Activated B cell treated with CpG ODN at 0.5 μM for 24 hours (primary cell): ENCODE measurements at regions of chr5 and their contacts with region 1.

Region 1: DNA sequence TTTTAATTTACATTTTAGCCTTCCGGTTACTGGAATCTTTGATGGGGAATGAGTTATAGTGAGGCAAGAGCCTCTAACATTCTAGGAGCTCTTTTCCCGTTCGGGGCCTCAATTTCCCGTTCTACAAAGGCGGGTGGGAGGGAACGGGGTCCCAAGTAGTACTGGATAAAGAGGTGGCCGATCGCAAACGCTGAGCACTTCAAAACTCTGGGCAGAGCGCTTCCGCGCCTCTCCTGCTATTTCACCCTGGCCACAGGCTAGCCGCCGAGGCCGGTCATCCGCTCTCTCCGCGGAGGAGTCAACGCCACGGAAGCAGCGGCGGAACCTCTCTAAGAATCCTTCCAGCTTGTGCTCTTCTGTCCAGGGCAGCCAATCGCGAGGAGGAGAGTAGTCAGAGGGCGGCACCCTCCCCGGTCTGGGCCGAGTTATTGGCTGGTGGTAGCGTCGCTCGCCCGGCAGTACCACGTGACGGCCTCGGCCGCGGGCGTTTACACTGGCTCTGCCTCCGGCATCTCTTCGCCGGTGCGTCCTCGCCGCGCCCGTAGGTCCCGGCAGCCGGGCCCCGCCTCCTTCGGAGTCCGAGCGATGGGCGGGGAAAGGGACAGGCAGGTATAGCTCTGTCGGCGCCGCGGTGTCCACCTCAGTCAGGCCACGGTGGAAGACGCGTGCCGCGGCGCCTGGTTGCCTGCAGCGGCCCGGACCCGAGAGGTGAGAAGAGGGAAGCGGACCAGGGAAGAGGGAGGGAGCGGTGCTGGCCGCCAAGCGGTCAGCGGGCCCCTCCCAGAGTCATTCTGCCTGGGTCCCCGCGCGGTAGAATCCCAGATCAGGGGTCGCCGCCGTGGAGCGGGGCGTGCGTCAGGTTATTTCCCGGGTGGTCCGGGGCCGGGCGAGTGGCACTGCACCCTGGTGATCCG is at the start of gene SLC26A2:
- DNase-seq: peak; percentile 88
- ATAC-seq: peak; percentile 97
- H3K4me3 Mint-ChIP-seq: peak within 1 kb of the TSS; percentile 98
- H3K27ac Mint-ChIP-seq: peak within 1 kb of the TSS; percentile 98
- H3K4me1 Mint-ChIP-seq: peaks cover 20% of the 10 kb centered on the region
- H3K27me3 Mint-ChIP-seq: no peaks in the 10 kb centered on the region
- CTCF ChIP-seq: no peak
- total RNA-seq, gene SLC26A2: 8.9 and 11.0 TPM in 2 replicates

Region 2: DNA sequence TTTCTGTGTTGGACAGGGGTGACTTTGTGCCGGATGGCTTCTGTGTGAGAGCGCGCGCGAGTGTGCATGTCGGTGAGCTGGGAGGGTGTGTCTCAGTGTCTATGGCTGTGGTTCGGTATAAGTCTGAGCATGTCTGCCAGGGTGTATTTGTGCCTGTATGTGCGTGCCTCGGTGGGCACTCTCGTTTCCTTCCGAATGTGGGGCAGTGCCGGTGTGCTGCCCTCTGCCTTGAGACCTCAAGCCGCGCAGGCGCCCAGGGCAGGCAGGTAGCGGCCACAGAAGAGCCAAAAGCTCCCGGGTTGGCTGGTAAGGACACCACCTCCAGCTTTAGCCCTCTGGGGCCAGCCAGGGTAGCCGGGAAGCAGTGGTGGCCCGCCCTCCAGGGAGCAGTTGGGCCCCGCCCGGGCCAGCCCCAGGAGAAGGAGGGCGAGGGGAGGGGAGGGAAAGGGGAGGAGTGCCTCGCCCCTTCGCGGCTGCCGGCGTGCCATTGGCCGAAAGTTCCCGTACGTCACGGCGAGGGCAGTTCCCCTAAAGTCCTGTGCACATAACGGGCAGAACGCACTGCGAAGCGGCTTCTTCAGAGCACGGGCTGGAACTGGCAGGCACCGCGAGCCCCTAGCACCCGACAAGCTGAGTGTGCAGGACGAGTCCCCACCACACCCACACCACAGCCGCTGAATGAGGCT is 1134.3 kb before region 1 on chr5 and contains the start of gene ADRB2:
- CTCF ChIA-PET with region 1: no interaction called
- POLR2A ChIA-PET with region 1: no interaction called
- intact Hi-C with region 1: loop called (anchors 10 kb)
- DNase-seq: peak; percentile 84
- ATAC-seq: peak; percentile 89
- H3K4me3 Mint-ChIP-seq: peak within 1 kb of the TSS; percentile 89
- H3K27ac Mint-ChIP-seq: peak within 1 kb of the TSS; percentile 98
- H3K4me1 Mint-ChIP-seq: peaks cover 75% of the 10 kb centered on the region
- H3K27me3 Mint-ChIP-seq: no peaks in the 10 kb centered on the region
- CTCF ChIP-seq: no peak
- total RNA-seq, gene ADRB2: 3.2 TPM in 2 replicates

Region 3: GRCh38 chr5:149357370-149358293 is 602.9 kb before region 1 on chr5 and contains the start of gene PCYOX1L:
- CTCF ChIA-PET with region 1: no interaction called
- POLR2A ChIA-PET with region 1: no interaction called
- intact Hi-C with region 1: loop called (anchors 5 kb)
- DNase-seq: peak; percentile 84
- ATAC-seq: peak; percentile 100
- H3K4me3 Mint-ChIP-seq: peak within 1 kb of the TSS; percentile 92
- H3K27ac Mint-ChIP-seq: peak within 1 kb of the TSS; percentile 65
- H3K4me1 Mint-ChIP-seq: peaks cover 16% of the 10 kb centered on the region
- H3K27me3 Mint-ChIP-seq: no peaks in the 10 kb centered on the region
- CTCF ChIP-seq: no peak
- total RNA-seq, gene PCYOX1L: 6.1 and 9.2 TPM in 2 replicates

Region 4: GRCh38 chr5:149514512-149514911 is 446.0 kb before region 1 on chr5:
- CTCF ChIA-PET with region 1: no interaction called
- POLR2A ChIA-PET with region 1: no interaction called
- intact Hi-C with region 1: no loop called
- DNase-seq: no peak
- ATAC-seq: no peak
- H3K4me3 Mint-ChIP-seq: no peak overlapping the region
- H3K27ac Mint-ChIP-seq: no peak overlapping the region
- H3K4me1 Mint-ChIP-seq: peaks cover 19% of the 10 kb centered on the region
- H3K27me3 Mint-ChIP-seq: no peaks in the 10 kb centered on the region
- CTCF ChIP-seq: no peak

Region 5: DNA sequence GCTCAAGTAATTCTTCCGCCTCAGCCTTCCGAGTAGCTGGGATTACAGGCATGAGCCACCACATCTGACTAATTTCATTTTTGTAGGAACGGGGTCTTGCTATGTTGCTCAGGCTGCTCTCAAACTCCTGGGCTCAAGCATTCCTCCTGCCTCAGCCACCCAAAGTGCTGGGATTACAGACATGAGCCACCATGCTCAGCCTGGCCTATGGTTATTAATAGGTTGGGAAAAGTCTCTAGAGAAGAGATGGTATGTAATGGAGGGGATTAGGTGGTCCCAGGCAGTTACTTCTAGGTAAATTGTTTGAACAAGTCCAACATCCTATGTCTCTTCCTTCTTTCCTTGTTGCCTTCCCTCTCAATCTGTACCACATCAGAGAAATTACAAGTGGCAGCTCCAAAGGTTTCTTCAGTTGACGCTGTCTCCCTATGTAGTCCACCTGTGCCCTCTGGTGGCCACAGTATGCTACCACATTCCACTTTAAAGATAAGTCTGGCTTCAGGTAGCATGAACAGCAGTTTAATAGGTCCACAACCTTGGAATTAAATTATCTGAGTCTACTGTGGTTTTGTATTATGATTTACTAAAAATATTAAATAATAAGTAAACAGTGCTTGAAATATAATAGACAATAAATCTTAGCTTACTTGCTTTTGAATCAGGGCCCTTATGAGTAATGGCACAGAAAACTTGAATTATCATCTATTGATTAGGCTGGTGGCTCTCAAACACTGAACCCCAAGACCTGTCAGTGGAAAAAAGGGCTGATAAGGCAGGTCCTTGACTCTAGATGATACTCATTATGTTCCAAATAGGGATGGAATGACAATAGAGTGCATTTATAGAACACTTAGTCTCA is 30.2 kb after region 1 on chr5:
- CTCF ChIA-PET with region 1: interaction called, 21 read pairs
- POLR2A ChIA-PET with region 1: no interaction called
- intact Hi-C with region 1: loop called (anchors 2 kb)
- DNase-seq: peak; percentile 34
- ATAC-seq: peak; percentile 99
- H3K4me3 Mint-ChIP-seq: no peak overlapping the region
- H3K27ac Mint-ChIP-seq: no peak overlapping the region
- H3K4me1 Mint-ChIP-seq: no peaks in the 10 kb centered on the region
- H3K27me3 Mint-ChIP-seq: no peaks in the 10 kb centered on the region
- CTCF ChIP-seq: peak; percentile 95

Region 6: GRCh38 chr5:150208187-150209015 is 247.9 kb after region 1 on chr5:
- CTCF ChIA-PET with region 1: no interaction called
- POLR2A ChIA-PET with region 1: no interaction called
- intact Hi-C with region 1: no loop called
- DNase-seq: no peak
- ATAC-seq: no peak
- H3K4me3 Mint-ChIP-seq: no peak overlapping the region
- H3K27ac Mint-ChIP-seq: no peak overlapping the region
- H3K4me1 Mint-ChIP-seq: peaks cover 9% of the 10 kb centered on the region
- H3K27me3 Mint-ChIP-seq: peaks cover 26% of the 10 kb centered on the region
- CTCF ChIP-seq: no peak